BJ (cell line): ENCODE measurements at regions of chr2 and their contacts with region 1.

Region 1: GRCh38 chr2:223957092-223957851 is at the start of gene MRPL44:
- DNase-seq: peak; percentile 67
- H3K4me3 ChIP-seq: peak within 1 kb of the TSS; percentile 61
- H3K27me3 ChIP-seq: no peaks in the 10 kb centered on the region
- CTCF ChIP-seq: no peak
- polyA plus RNA-seq, gene MRPL44: 12.8 and 17.8 TPM in 2 replicates

Region 2: GRCh38 chr2:223760838-223761502 is 196.3 kb before region 1 on chr2:
- CTCF ChIA-PET with region 1: no interaction called
- POLR2A ChIA-PET with region 1: no interaction called
- DNase-seq: peak; percentile 41
- H3K4me3 ChIP-seq: no peak overlapping the region
- H3K27me3 ChIP-seq: no peaks in the 10 kb centered on the region
- CTCF ChIP-seq: no peak

Region 3: GRCh38 chr2:223970343-223971128 is 13.3 kb after region 1 on chr2:
- CTCF ChIA-PET with region 1: interaction called, 22 read pairs
- POLR2A ChIA-PET with region 1: no interaction called
- DNase-seq: no peak
- H3K4me3 ChIP-seq: no peak overlapping the region
- H3K27me3 ChIP-seq: no peaks in the 10 kb centered on the region
- CTCF ChIP-seq: peak; percentile 82